ENCODE measurements at regions of chr12 and their contacts with region 1.

Region 1: DNA sequence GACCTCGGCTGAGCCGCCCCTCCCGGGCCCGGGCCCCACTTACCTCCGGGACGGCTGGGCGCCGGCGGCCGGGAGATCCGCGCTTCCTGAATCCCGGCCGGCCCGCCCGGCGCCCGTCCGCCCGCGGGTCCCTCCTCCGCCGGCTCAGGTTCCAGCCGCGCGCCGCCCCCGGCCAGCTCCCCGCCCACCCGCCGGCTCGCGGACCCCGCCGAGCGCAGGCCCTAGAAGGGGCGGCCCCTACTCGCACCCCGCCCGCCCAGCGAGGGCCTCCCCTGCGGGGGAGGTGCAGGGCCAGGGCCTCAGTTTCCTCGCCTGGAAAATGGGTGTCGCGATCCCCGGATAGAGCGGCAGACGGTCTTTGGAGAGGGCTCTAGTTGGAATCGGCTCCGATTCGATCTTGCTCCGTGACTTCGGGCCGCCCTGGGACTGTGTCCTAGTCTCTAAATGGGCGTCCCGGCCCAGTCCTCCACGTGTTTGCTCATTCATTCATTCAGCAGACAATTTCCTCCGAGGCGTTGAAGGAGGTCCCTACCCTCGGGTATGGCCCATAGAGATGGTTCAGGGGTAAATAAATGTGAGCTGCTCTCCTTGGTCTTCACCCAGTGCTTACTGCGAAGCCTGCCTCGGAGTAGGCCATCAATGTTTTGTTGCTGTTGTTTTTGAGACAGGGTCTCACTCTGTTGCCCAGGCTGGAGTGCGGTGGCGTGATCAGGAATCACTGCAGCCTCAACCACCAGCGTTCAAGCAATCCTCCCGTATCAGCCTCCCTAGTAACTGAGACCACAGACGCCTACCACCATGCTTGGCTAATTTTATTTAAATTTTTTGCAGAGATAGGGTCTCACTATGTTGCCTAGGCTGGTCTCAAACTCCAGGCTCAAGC is at the start of gene TRPV4:
- DNase-seq: no peak
- ATAC-seq: no peak
- H3K4me3 ChIP-seq: no peak within 1 kb of the TSS
- H3K27ac ChIP-seq: peak within 1 kb of the TSS in 1 of 2 experiments; percentile 59; a peak in 2 of 6 replicates
- H3K4me1 ChIP-seq: peaks cover 31% of the 10 kb centered on the region
- CTCF ChIP-seq: no peak
- EP300 ChIP-seq: no peak
- POLR2A ChIP-seq: no peak
- RAD21 ChIP-seq: no peak
- polyA plus RNA-seq, gene TRPV4: 0.37 and 0.52 TPM in 2 replicates

Region 2: DNA sequence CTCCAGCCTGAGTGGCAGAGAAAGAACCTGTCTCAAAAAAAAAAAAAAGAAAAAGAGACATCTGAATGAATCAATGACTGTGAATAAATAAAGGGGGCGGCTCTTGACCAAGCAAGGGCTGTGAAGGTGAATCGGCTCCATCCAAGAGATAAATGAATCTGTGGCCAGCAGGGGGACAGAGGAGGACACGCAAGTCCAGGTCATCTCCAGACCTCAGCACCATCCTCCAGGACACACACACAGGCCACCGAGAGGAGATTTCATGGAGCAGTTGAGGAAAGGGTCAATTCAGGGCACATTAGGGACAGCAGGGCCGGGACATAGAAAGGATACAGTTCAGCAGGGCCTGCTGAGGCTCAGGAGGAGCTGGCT is 21.9 kb before region 1 on chr12:
- CTCF ChIA-PET with region 1: interaction called, 56 read pairs
- POLR2A ChIA-PET with region 1: no interaction called
- DNase-seq: peak in 1 of 2 experiments; percentile 67
- ATAC-seq: peak; percentile 66 to 84; a peak in 4 of 6 replicates
- H3K4me3 ChIP-seq: no peak overlapping the region
- H3K27ac ChIP-seq: no peak overlapping the region
- H3K4me1 ChIP-seq: peaks cover 3% of the 10 kb centered on the region; the same call in 1 of the 3 replicates
- CTCF ChIP-seq: no peak
- EP300 ChIP-seq: no peak
- POLR2A ChIP-seq: no peak
- RAD21 ChIP-seq: no peak

Measured in A549 (cell line).